Activated B cell treated with CpG ODN at 0.5 μM for 24 hours (primary cell): ENCODE measurements at regions of chr1 and their contacts with region 1.

Region 1: DNA sequence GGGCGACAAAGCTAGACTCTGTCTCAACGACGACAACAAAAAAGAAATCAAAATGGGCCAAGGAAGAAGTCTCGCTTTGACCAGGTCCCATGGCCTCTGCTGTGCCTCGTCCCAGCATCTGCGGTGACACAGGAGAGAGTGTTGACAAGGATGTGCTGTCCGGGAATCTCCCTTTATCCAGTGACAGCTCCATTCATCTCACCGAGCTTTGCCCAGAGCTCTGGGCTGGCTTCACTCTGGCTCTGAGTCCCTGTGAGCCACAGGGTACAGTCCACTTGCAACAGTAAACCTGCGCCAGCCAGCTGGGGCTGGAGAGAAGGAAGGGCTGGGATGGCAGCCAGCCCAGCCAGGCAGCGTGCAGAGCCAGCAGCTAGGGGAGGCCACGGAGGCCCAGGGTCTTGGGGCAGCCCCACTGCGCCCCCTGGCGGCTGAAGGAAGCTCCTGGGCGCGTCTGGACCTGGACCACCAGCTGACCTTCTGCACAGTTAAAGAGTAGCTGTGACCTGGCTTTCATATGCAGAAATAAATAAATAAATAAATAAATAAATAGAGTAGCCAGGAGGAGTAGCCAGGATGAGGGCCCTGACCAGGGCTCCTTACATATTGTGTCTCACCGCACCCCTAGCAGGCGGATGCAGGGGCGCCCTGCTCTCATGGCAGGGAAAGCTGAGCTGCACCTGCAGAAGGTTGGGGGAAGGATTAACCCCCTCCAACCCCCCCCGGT is 29.7 kb downstream of the ENO1 start:
- DNase-seq: peak; percentile 76
- ATAC-seq: peak; percentile 92
- H3K4me3 Mint-ChIP-seq: no peak overlapping the region
- H3K27ac Mint-ChIP-seq: no peak overlapping the region
- H3K4me1 Mint-ChIP-seq: peaks cover 2% of the 10 kb centered on the region
- H3K27me3 Mint-ChIP-seq: peaks cover 4% of the 10 kb centered on the region
- CTCF ChIP-seq: no peak

Region 2: GRCh38 chr1:8015036-8015808 is 833.6 kb before region 1 on chr1:
- CTCF ChIA-PET with region 1: interaction called, 61 read pairs
- POLR2A ChIA-PET with region 1: interaction called, 3 read pairs
- intact Hi-C with region 1: loop called (anchors 2 kb)
- DNase-seq: no peak
- ATAC-seq: peak; percentile 45
- H3K4me3 Mint-ChIP-seq: no peak overlapping the region
- H3K27ac Mint-ChIP-seq: no peak overlapping the region
- H3K4me1 Mint-ChIP-seq: peaks cover 3% of the 10 kb centered on the region
- H3K27me3 Mint-ChIP-seq: peaks cover 17% of the 10 kb centered on the region
- CTCF ChIP-seq: no peak

Region 3: GRCh38 chr1:8560611-8561544 is 287.9 kb before region 1 on chr1:
- CTCF ChIA-PET with region 1: interaction called, 72 read pairs
- POLR2A ChIA-PET with region 1: interaction called, 5 read pairs
- intact Hi-C with region 1: loop called (anchors 1 kb)
- DNase-seq: no peak
- ATAC-seq: peak; percentile 89
- H3K4me3 Mint-ChIP-seq: peak overlapping the region; percentile 7
- H3K27ac Mint-ChIP-seq: peak overlapping the region; percentile 54
- H3K4me1 Mint-ChIP-seq: peaks cover 40% of the 10 kb centered on the region
- H3K27me3 Mint-ChIP-seq: no peaks in the 10 kb centered on the region
- CTCF ChIP-seq: peak; percentile 65

Region 4: DNA sequence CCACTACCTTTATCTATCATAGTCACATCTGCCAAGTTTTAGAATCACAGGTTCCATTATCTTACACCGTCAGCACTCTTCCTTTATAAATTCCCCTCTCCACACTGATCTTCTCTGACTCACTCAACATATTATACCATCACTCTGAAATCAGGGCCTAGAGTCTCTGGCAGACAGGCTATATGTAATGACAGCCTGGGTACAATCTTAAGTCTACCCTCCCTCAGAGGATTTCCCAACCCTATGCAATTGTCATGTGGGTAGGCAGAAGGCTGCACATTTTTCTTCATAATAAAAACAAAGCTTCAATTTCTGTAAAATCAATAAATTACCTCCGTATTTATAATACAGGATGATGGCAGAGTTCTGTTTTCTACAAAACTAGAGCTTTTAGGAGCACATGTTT is 169.4 kb before region 1 on chr1:
- CTCF ChIA-PET with region 1: interaction called, 10 read pairs
- POLR2A ChIA-PET with region 1: no interaction called
- intact Hi-C with region 1: no loop called
- DNase-seq: no peak
- ATAC-seq: no peak
- H3K4me3 Mint-ChIP-seq: no peak overlapping the region
- H3K27ac Mint-ChIP-seq: no peak overlapping the region
- H3K4me1 Mint-ChIP-seq: peaks cover 41% of the 10 kb centered on the region
- H3K27me3 Mint-ChIP-seq: no peaks in the 10 kb centered on the region
- CTCF ChIP-seq: no peak

Region 5: DNA sequence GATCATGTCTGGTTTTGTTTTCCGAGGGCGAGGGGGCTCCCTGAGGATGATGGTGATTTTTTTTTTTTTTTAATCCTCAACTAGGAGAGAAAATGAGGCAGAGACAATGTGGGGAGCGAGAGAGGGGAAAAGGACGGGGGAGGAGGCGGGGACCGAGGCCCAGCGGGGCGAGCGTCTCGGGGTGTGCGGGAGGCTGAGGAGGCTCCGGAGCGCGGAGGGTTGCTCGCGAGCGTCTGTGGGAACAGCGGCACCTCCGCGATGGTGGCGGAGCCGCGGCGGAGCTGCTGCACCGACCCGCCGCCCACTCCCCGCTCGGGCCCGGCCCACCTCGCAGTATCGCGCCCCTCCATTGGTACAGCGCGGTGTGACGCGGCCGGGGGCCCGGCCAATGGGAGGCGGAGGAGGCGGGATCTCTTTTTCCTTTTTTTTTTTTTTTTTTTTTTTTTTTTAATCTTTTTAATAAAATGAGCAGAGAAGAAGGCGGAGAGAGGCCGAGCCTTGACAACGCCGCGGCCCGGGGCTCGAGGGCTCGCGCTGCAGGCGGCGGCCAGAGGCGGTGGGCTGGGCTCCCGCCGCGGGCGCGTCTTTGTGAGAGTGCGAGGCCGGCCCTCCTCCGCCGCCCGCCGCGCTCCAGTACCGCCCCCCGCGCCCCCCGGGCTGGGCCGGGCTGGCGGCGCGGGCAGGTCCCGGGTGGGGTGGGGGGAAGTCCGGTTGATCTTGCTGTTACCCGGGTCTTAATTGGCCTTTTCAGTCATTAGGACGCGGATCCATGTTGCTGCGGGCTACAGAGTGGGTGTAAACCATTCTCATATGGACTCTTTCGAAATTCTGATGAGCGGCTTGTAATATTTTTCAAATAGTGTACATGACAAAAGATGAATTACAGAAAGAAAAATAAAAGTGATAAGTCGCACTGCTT is 31.2 kb before region 1 on chr1 and contains the start of gene RERE:
- CTCF ChIA-PET with region 1: interaction called, 15 read pairs
- POLR2A ChIA-PET with region 1: interaction called, 7 read pairs
- intact Hi-C with region 1: loop called (anchors 2 kb)
- DNase-seq: peak; percentile 99
- ATAC-seq: peak; percentile 93
- H3K4me3 Mint-ChIP-seq: peak within 1 kb of the TSS; percentile 94
- H3K27ac Mint-ChIP-seq: peak within 1 kb of the TSS; percentile 96
- H3K4me1 Mint-ChIP-seq: peaks cover 42% of the 10 kb centered on the region
- H3K27me3 Mint-ChIP-seq: no peaks in the 10 kb centered on the region
- CTCF ChIP-seq: no peak
- total RNA-seq, gene RERE: 90.5 and 98.8 TPM in 2 replicates

Region 6: GRCh38 chr1:8878448-8879347 is 29.9 kb after region 1 on chr1 and contains the start of gene ENO1:
- CTCF ChIA-PET with region 1: interaction called, 4 read pairs
- POLR2A ChIA-PET with region 1: interaction called, 12 read pairs
- intact Hi-C with region 1: no loop called
- DNase-seq: peak; percentile 100
- ATAC-seq: peak; percentile 79
- H3K4me3 Mint-ChIP-seq: peak within 1 kb of the TSS; percentile 95
- H3K27ac Mint-ChIP-seq: peak within 1 kb of the TSS; percentile 96
- H3K4me1 Mint-ChIP-seq: peaks cover 45% of the 10 kb centered on the region
- H3K27me3 Mint-ChIP-seq: no peaks in the 10 kb centered on the region
- CTCF ChIP-seq: no peak
- total RNA-seq, gene ENO1: 837 and 886 TPM in 2 replicates

Region 7: DNA sequence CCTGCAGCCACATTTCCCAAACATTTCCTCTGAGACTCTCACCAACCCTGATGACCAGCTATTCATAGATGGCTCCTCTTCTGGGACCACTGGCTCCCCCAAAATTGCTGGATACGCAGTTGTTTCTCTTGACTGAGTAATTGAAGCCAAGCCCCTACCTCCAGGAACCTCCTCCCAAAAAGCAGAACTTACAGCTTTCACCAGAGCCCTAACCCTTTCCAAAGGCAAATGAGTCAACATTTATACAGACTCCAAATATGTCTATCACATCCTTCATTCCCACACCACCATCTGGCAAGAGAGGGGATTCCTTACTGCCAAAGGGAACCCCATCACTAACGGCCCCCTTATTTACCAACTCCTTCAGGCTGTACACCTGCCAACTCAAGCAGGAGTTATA is 76.6 kb after region 1 on chr1:
- CTCF ChIA-PET with region 1: no interaction called
- POLR2A ChIA-PET with region 1: no interaction called
- intact Hi-C with region 1: no loop called
- DNase-seq: no peak
- ATAC-seq: no peak
- H3K4me3 Mint-ChIP-seq: no peak overlapping the region
- H3K27ac Mint-ChIP-seq: no peak overlapping the region
- H3K4me1 Mint-ChIP-seq: no peaks in the 10 kb centered on the region
- H3K27me3 Mint-ChIP-seq: no peaks in the 10 kb centered on the region
- CTCF ChIP-seq: no peak